Activated CD4-positive, alpha-beta memory T cell treated with anti-CD3 and anti-CD28 coated beads, Interleukin-2, amount 10 ng/mL, durations not matched to agents 7 days and 5 days (primary cell): ENCODE measurements at regions of chr1 and their contacts with region 1.

Region 1: GRCh38 chr1:235011599-235012435 is 116.8 kb downstream of the TOMM20 start:
- DNase-seq: peak; percentile 98
- H3K4me3 Mint-ChIP-seq: peak overlapping the region; percentile 57
- H3K27ac Mint-ChIP-seq: peak overlapping the region; percentile 94
- H3K4me1 Mint-ChIP-seq: peaks cover 78% of the 10 kb centered on the region
- H3K27me3 Mint-ChIP-seq: peaks cover 11% of the 10 kb centered on the region

Region 2: GRCh38 chr1:234722904-234723720 is 288.7 kb before region 1 on chr1:
- CTCF ChIA-PET with region 1: interaction called, 3 read pairs
- POLR2A ChIA-PET with region 1: interaction called, 30 read pairs
- DNase-seq: peak; percentile 51
- H3K4me3 Mint-ChIP-seq: peak overlapping the region; percentile 76
- H3K27ac Mint-ChIP-seq: peak overlapping the region; percentile 89
- H3K4me1 Mint-ChIP-seq: peaks cover 67% of the 10 kb centered on the region
- H3K27me3 Mint-ChIP-seq: no peaks in the 10 kb centered on the region

Region 3: GRCh38 chr1:234842726-234843641 is 168.8 kb before region 1 on chr1:
- CTCF ChIA-PET with region 1: interaction called, 4 read pairs
- POLR2A ChIA-PET with region 1: interaction called, 19 read pairs
- DNase-seq: peak; percentile 73
- H3K4me3 Mint-ChIP-seq: peak overlapping the region; percentile 61
- H3K27ac Mint-ChIP-seq: peak overlapping the region; percentile 90
- H3K4me1 Mint-ChIP-seq: peaks cover 79% of the 10 kb centered on the region
- H3K27me3 Mint-ChIP-seq: peaks cover 2% of the 10 kb centered on the region

Region 4: GRCh38 chr1:234963180-234963903 is 48.5 kb before region 1 on chr1:
- CTCF ChIA-PET with region 1: interaction called, 5 read pairs
- POLR2A ChIA-PET with region 1: interaction called, 20 read pairs
- DNase-seq: peak; percentile 92
- H3K4me3 Mint-ChIP-seq: peak overlapping the region; percentile 38
- H3K27ac Mint-ChIP-seq: peak overlapping the region; percentile 89
- H3K4me1 Mint-ChIP-seq: peaks cover 65% of the 10 kb centered on the region
- H3K27me3 Mint-ChIP-seq: no peaks in the 10 kb centered on the region

Region 5: GRCh38 chr1:234978397-234979295 is 33.2 kb before region 1 on chr1:
- CTCF ChIA-PET with region 1: interaction called, 7 read pairs
- POLR2A ChIA-PET with region 1: interaction called, 89 read pairs
- DNase-seq: peak; percentile 69
- H3K4me3 Mint-ChIP-seq: peak overlapping the region; percentile 71
- H3K27ac Mint-ChIP-seq: peak overlapping the region; percentile 94
- H3K4me1 Mint-ChIP-seq: peaks cover 83% of the 10 kb centered on the region
- H3K27me3 Mint-ChIP-seq: no peaks in the 10 kb centered on the region

Region 6: GRCh38 chr1:235022981-235023710 is 11.3 kb after region 1 on chr1:
- CTCF ChIA-PET with region 1: interaction called, 5 read pairs
- POLR2A ChIA-PET with region 1: interaction called, 10 read pairs
- DNase-seq: no peak
- H3K4me3 Mint-ChIP-seq: no peak overlapping the region
- H3K27ac Mint-ChIP-seq: no peak overlapping the region
- H3K4me1 Mint-ChIP-seq: peaks cover 32% of the 10 kb centered on the region
- H3K27me3 Mint-ChIP-seq: no peaks in the 10 kb centered on the region

Region 7: DNA sequence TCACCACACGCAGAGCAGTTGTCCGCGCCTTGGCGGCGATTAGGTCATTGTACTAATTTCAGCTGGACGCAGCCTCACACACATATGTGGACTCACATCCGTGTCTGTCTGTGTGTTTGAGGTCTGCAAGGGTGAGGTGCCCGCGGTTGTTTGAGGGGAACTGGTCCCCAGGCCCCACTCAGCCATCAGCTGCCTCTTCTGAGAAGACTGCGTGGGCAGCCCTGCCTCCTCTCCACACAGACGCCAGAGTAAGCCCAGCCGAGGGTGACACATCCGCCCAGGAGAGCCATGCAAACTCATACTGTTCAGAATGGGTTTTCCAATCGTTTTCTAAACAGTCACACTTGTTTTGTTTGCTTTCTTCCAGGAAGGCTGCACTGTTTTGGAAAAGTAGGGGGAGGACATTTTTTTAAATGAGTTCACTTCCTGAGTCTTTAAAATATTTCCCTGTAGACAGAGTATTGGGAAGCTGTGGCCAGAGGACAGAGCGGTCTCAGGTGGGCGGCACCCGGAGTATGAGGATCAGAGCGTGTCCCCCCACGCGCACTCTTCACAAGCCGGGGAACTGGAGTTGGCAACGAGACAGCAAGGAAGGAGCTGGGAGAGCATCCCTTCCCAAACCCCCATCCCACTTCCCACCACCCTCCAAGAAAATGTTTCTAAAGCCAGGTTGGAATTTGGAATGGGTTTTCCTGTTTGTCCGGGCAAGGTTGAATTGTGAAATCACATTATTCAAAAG is 63.5 kb after region 1 on chr1:
- CTCF ChIA-PET with region 1: interaction called, 3 read pairs
- POLR2A ChIA-PET with region 1: interaction called, 41 read pairs
- DNase-seq: peak; percentile 75
- H3K4me3 Mint-ChIP-seq: peak overlapping the region; percentile 51
- H3K27ac Mint-ChIP-seq: peak overlapping the region; percentile 91
- H3K4me1 Mint-ChIP-seq: peaks cover 37% of the 10 kb centered on the region
- H3K27me3 Mint-ChIP-seq: no peaks in the 10 kb centered on the region